Activated CD8-positive, alpha-beta T cell treated with anti-CD3 and anti-CD28 coated beads for 36 hours (primary cell): ENCODE measurements at regions of chr3 and their contacts with region 1.

Region 1: DNA sequence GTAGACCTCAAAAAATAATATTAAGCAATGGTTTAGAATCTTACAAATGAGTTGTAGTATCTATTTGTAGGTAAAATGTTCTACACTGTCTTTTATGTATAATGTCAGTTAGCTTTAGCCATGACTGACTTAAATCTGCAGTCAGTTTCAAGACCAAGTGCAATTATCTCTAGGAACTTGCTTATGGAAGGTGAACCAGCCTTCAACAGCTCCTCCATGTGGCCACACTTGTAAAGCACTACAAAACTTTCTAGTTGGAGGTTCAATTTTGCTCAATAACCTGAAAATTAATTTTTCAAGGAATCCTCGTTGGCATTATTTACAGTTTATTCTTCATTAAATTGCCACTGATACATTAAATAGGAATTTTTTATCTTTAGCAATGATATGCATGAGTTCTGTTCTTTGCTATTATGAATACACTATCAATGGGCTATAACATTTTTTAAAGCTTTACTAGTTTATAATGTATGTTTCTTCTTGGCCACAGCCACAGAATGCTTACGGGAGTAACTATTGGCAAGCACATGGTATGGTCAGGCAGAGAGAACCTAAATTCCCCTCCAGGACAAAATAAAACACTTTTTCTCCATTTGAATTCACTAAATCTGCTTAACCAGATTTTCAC is 315.3 kb upstream of the UBE2E2 start:
- DNase-seq: peak; percentile 27
- ATAC-seq: no peak
- H3K4me3 Mint-ChIP-seq: no peak overlapping the region
- H3K27ac Mint-ChIP-seq: no peak overlapping the region
- H3K4me1 Mint-ChIP-seq: no peaks in the 10 kb centered on the region
- H3K27me3 Mint-ChIP-seq: peaks cover 4% of the 10 kb centered on the region
- CTCF ChIP-seq: peak; percentile 34

Region 2: DNA sequence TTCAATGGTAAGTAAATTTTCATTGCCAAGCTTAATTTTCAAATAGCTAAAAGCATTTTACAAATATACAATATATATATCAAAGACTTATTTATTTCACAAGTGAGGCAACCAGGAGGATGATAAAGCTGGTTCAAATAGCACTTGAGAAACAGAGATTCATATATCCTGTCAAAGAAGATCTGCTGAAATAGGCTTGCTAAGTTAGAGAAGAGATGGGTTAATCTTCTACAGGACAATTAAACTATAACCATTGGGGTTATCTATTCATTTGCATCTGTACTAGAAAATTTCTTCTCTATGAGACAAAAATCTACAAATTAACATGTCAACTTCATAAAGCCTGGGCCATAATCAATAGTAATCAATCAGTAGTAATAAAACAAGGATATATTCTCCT is 322.4 kb before region 1 on chr3:
- CTCF ChIA-PET with region 1: interaction called, 5 read pairs
- POLR2A ChIA-PET with region 1: no interaction called
- intact Hi-C with region 1: loop called (anchors 10 kb)
- DNase-seq: no peak
- ATAC-seq: no peak
- H3K4me3 Mint-ChIP-seq: no peak overlapping the region
- H3K27ac Mint-ChIP-seq: no peak overlapping the region
- H3K4me1 Mint-ChIP-seq: no peaks in the 10 kb centered on the region
- H3K27me3 Mint-ChIP-seq: no peaks in the 10 kb centered on the region
- CTCF ChIP-seq: no peak